ENCODE measurements at regions of chr6 and their contacts with region 1.

Region 1: GRCh38 chr6:158644231-158645063 is at the start of gene DYNLT1:
- DNase-seq: peak; percentile 95
- H3K4me3 Mint-ChIP-seq: peak within 1 kb of the TSS; percentile 97
- H3K27ac Mint-ChIP-seq: peak within 1 kb of the TSS; percentile 100
- H3K4me1 Mint-ChIP-seq: peaks cover 80% of the 10 kb centered on the region
- H3K27me3 Mint-ChIP-seq: no peaks in the 10 kb centered on the region
- total RNA-seq, gene DYNLT1: 117 to 120 TPM

Region 2: GRCh38 chr6:158231551-158232315 is 412.7 kb before region 1 on chr6:
- CTCF ChIA-PET with region 1: no interaction called
- POLR2A ChIA-PET with region 1: no interaction called
- intact Hi-C with region 1: loop called (anchors 5 kb)
- DNase-seq: peak; percentile 76
- H3K4me3 Mint-ChIP-seq: peak overlapping the region; percentile 81
- H3K27ac Mint-ChIP-seq: peak overlapping the region; percentile 46
- H3K4me1 Mint-ChIP-seq: peaks cover 31% of the 10 kb centered on the region
- H3K27me3 Mint-ChIP-seq: no peaks in the 10 kb centered on the region

Region 3: GRCh38 chr6:158437571-158437970 is 206.9 kb before region 1 on chr6:
- CTCF ChIA-PET with region 1: no interaction called
- POLR2A ChIA-PET with region 1: no interaction called
- intact Hi-C with region 1: no loop called
- DNase-seq: no peak
- H3K4me3 Mint-ChIP-seq: no peak overlapping the region
- H3K27ac Mint-ChIP-seq: no peak overlapping the region
- H3K4me1 Mint-ChIP-seq: no peaks in the 10 kb centered on the region
- H3K27me3 Mint-ChIP-seq: no peaks in the 10 kb centered on the region

Region 4: DNA sequence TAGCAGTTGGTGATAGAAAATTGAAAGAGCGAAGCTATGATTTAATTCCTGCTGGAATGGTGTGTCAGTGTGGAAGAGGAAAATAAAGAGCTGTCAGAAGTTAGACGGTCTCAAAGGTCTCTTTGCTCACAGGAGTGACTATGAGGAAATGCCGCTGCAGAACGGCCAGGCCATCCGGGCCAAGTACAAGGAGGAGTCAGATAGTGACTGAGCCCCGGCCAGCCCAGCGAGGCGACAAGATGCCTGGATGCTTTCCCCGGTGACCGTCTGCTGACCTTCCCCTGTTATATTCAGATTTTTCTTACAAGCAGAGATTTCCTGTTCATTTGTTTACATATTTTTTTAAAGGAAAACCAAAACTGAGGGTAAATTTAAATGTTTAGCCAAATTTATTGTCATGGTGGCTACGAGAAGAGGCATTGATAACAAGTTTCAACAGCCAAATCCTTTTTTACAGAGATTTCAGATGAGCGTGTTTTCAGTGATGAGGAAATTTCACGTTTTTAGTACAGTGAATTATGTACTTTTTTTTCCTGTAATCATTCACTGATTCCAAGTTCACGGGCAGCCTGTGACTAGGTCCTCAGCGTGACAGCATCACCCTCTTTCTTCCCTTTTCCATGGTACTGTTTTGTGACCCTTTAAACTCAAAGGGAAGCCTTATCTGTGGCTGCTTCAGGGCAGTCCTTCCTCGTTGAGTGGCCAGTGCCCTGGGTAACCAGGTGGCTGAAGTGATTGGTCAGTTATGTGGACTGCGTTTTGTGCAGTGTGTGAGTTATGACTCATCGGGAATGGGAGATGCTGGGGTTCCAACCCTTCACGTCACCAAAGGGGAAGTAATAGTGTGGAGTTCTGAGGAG is 12.5 kb before region 1 on chr6:
- CTCF ChIA-PET with region 1: interaction called, 4 read pairs
- POLR2A ChIA-PET with region 1: interaction called, 17 read pairs
- intact Hi-C with region 1: loop called (anchors 2 kb)
- DNase-seq: no peak
- H3K4me3 Mint-ChIP-seq: no peak overlapping the region
- H3K27ac Mint-ChIP-seq: peak overlapping the region; percentile 81
- H3K4me1 Mint-ChIP-seq: peaks cover 56% of the 10 kb centered on the region
- H3K27me3 Mint-ChIP-seq: no peaks in the 10 kb centered on the region

Region 5: DNA sequence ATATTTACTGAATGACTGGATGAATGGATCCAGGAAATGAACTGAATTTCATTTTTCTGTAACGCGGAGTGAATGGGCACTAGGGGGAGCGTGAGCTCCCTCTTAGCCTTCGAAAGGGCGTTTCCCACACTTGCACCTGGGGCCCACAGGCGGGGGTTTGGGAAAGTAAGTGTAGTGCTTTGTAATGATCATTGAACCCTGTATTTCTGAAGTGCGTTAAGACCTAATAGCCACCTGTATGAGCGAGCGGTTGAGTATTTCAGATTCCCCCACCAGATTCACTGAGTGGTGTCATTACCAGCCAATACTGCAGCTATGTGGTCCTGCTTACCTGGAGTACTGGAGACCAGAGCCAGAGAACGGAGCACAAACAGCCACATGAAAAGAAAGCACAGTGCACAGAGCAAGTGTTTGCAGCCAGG is 15.9 kb after region 1 on chr6:
- CTCF ChIA-PET with region 1: interaction called, 21 read pairs
- POLR2A ChIA-PET with region 1: interaction called, 99 read pairs
- intact Hi-C with region 1: no loop called
- DNase-seq: peak; percentile 56
- H3K4me3 Mint-ChIP-seq: no peak overlapping the region
- H3K27ac Mint-ChIP-seq: no peak overlapping the region
- H3K4me1 Mint-ChIP-seq: peaks cover 35% of the 10 kb centered on the region
- H3K27me3 Mint-ChIP-seq: no peaks in the 10 kb centered on the region

Region 6: GRCh38 chr6:158686791-158687381 is 42.4 kb after region 1 on chr6:
- CTCF ChIA-PET with region 1: interaction called, 14 read pairs
- POLR2A ChIA-PET with region 1: interaction called, 9 read pairs
- intact Hi-C with region 1: no loop called
- DNase-seq: peak; percentile 38
- H3K4me3 Mint-ChIP-seq: no peak overlapping the region
- H3K27ac Mint-ChIP-seq: peak overlapping the region; percentile 47
- H3K4me1 Mint-ChIP-seq: peaks cover 64% of the 10 kb centered on the region
- H3K27me3 Mint-ChIP-seq: no peaks in the 10 kb centered on the region

Region 7: GRCh38 chr6:159098636-159099106 is 454.2 kb after region 1 on chr6:
- CTCF ChIA-PET with region 1: no interaction called
- POLR2A ChIA-PET with region 1: no interaction called
- intact Hi-C with region 1: loop called (anchors 5 kb)
- DNase-seq: peak; percentile 83
- H3K4me3 Mint-ChIP-seq: peak overlapping the region; percentile 63
- H3K27ac Mint-ChIP-seq: peak overlapping the region; percentile 87
- H3K4me1 Mint-ChIP-seq: peaks cover 79% of the 10 kb centered on the region
- H3K27me3 Mint-ChIP-seq: no peaks in the 10 kb centered on the region